AG04449 (cell line): ENCODE measurements at regions of chr7 and their contacts with region 1.

Region 1: GRCh38 chr7:103074519-103075336 is at the starts of genes ARMC10 and FBXL13:
- DNase-seq: peak; percentile 42
- H3K4me3 ChIP-seq: peak within 1 kb of the TSS; percentile 95
- CTCF ChIP-seq: peak; percentile 20

Region 2: DNA sequence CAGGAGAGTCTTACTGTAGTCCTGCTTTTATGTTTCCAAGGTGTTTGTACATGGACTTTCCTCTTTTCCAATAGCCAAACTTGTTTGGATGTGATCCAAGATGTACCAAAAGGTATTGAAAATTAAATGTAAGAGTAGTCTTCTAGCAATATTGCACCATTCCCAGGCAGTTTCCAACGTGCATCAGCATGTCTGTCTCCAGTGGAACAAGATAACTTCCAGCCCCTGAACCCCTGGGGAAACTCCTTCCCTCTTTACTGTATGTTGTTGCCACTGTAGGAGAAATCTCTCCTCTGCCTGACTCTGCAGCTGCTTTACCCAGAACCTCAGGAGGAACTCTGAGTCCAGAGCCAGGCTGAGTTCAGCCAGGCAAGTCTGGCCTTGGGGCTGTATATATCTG is 18.7 kb after region 1 on chr7:
- CTCF ChIA-PET with region 1: interaction called, 12 read pairs
- POLR2A ChIA-PET with region 1: no interaction called
- DNase-seq: no peak
- H3K4me3 ChIP-seq: no peak overlapping the region
- CTCF ChIP-seq: no peak